ENCODE measurements at regions of chr5 and their contacts with region 1.

Region 1: GRCh38 chr5:176519810-176520720 is 17.1 kb downstream of the RNF44 start:
- DNase-seq: no peak
- H3K4me3 ChIP-seq: no peak overlapping the region
- H3K27ac ChIP-seq: no peak overlapping the region
- H3K4me1 ChIP-seq: no peaks in the 10 kb centered on the region
- H3K27me3 ChIP-seq: no peaks in the 10 kb centered on the region
- CTCF ChIP-seq: no peak
- EP300 ChIP-seq: no peak
- POLR2A ChIP-seq: no peak

Region 2: GRCh38 chr5:176458904-176459561 is 61.0 kb before region 1 on chr5:
- intact Hi-C with region 1: loop called in 1 of 4 experiments (anchors 5 kb)
- DNase-seq: no peak
- H3K4me3 ChIP-seq: no peak overlapping the region
- H3K27ac ChIP-seq: no peak overlapping the region
- H3K4me1 ChIP-seq: peaks cover 2% of the 10 kb centered on the region
- H3K27me3 ChIP-seq: no peaks in the 10 kb centered on the region
- CTCF ChIP-seq: no peak
- EP300 ChIP-seq: no peak
- POLR2A ChIP-seq: no peak

Region 3: DNA sequence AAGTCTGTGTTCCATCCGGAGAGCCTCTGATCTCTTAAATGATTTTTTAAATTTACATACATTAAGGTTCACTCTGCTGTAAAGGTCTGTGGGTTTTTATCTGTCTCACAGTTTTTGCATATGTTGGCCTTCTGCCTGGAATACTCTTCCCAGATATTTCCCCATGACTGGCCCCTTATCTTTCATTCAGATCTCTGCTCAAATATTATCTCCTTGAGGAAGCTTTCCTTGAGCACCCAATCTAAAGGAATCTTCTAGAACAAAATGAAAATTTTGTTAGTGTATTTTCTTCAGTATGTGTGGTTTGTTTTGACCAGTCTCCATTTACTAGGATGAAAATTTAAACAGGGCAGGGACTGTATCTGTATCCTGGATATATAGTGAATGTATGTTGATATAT is 45.6 kb before region 1 on chr5:
- intact Hi-C with region 1: no loop called
- DNase-seq: no peak
- H3K4me3 ChIP-seq: no peak overlapping the region
- H3K27ac ChIP-seq: no peak overlapping the region
- H3K4me1 ChIP-seq: no peaks in the 10 kb centered on the region
- H3K27me3 ChIP-seq: no peaks in the 10 kb centered on the region
- CTCF ChIP-seq: no peak
- EP300 ChIP-seq: no peak
- POLR2A ChIP-seq: no peak